ENCODE measurements at regions of chr16 and their contacts with region 1.

Region 1: DNA sequence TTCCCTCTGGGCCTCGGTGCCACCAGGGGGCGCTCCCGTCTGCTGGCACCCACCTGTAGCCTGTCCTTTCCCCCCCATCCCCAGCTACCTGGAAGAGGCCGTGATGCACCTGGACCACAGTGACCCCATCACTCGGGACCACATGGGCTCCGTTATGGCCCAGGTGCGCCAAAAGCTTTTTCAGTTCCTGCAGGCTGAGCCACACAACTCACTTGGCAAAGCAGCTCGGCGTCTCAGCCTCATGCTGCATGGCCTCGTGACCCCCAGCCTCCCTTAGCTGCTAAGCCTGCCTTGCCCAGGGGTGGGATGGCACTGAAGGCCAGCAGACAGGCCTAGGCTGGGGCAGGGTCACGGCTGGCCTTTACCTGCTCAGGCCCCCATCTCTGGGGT is 818 bp upstream of the NRN1L start:
- DNase-seq: peak; percentile 47 to 76
- H3K4me3 ChIP-seq: no peak overlapping the region
- H3K27ac ChIP-seq: peak overlapping the region; percentile 66
- H3K4me1 ChIP-seq: peaks cover 0 to 23% (median 11%) of the 10 kb centered on the region in 4 donors
- H3K27me3 ChIP-seq: no peaks in the 10 kb centered on the region
- CTCF ChIP-seq: peak; percentile 89 to 92

Region 2: GRCh38 chr16:67833418-67834241 is 50.2 kb before region 1 on chr16:
- intact Hi-C with region 1: loop called (anchors 10 kb)
- DNase-seq: peak; percentile 95 to 97
- H3K4me3 ChIP-seq: peak overlapping the region; percentile 76 to 82
- H3K27ac ChIP-seq: peak overlapping the region; percentile 78 to 88
- H3K4me1 ChIP-seq: peaks cover 0 to 19% (median 16%) of the 10 kb centered on the region in 4 donors
- H3K27me3 ChIP-seq: no peaks in the 10 kb centered on the region
- CTCF ChIP-seq: no peak

Region 3: DNA sequence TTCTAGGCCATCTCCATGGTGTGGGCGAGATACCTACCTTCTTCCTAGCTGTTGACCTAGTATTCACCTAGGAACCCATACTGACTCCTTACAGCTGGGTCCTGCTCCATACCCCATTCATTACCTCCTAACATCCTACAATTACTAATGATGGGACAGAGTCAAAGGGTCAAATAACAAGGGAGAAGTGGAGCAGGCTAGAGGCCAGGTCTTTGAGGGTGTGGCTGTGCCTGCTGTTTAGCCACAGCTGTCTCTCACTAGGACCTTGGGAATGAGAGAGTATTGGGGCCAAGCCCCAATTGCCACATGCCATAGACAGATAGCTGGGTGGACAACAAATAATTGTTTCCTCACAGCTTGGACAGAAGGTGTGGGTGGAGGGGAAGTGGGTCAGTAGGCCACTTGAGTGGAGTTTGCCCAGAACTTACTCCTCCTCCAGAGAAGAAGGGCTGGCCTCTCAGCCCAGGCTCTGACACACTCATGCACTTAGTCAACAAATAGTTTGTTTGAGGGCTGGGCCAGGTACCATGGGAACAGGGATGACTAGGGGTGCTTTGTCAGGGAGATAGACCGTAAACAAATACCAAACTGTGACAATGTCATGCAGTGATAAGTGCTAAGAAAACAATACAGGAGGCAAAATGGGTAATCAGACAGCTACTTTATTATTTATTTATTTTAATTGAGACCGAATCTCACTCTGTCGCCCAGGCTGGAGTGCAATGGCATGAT is 26.2 kb before region 1 on chr16:
- intact Hi-C with region 1: no loop called
- DNase-seq: peak; percentile 89 to 92
- H3K4me3 ChIP-seq: no peak overlapping the region
- H3K27ac ChIP-seq: peak overlapping the region; percentile 72 to 85
- H3K4me1 ChIP-seq: peaks cover 15 to 71% (median 49%) of the 10 kb centered on the region in 4 donors
- H3K27me3 ChIP-seq: no peaks in the 10 kb centered on the region
- CTCF ChIP-seq: no peak

Measured in tibial artery (tissue), 4 donors.